Posterior cingulate gyrus (tissue), 11 donors: ENCODE measurements at regions of chr14 and their contacts with region 1.

Region 1: GRCh38 chr14:50954811-50955372 is 10.6 kb upstream of the PYGL start:
- DNase-seq: no peak

Region 2: GRCh38 chr14:50860478-50861086 is 94.3 kb before region 1 on chr14:
- intact Hi-C with region 1: loop called (anchors 5 kb)
- DNase-seq: peak; percentile 71 to 96 (median 85)

Region 3: GRCh38 chr14:51020024-51020710 is 65.3 kb after region 1 on chr14:
- intact Hi-C with region 1: loop called (anchors 10 kb)
- DNase-seq: peak in 7 of 10 donors; percentile 36 to 90 (median 54)

Region 4: DNA sequence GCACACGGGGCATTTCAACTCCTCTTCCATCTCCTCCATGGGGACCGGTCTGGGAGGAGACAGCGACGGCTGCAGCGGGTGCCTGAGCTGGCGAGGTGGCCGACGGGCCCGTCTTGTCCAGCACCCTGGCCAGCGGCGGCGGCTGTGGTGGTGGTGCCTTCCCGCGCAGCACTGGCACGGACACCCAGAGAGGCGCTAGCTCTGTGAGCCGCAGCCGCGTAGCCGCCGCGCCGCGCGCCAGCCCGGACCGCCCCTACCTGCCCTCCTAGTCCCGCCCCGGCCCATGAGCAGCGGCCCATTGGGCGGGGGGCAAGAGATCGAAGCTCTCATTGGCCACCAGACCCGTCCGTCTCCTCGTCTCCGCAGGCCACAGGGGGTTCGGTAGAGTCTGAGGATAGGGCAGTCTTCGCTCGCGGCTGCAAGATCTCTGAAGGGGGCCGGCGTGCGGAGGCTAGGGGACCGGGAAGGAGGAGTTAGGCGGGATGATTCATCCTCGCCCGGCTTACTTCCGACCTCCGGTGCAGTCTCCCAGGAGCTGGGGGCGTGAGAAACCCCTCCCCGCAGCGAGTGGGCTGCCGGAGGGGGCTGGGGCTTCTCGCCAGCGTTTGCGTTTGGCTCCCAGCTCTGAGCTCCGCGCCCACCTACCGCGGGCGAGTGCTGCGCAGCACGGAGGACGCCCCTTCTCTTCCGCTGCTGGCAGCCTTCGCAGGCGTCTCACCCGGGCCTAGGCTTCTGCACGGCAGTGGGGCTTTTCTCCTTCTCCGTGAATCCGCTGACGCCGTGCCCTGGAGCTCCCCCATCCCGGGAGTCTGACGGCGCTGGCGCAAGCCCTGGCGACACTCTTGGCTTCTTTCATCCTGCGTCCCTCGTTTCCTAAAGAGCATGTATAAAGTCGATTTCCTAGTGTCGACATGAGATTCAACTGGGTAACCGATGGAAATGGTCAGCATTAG is 140.3 kb after region 1 on chr14 and contains the start of gene TRIM9:
- intact Hi-C with region 1: loop called (anchors 5 kb)
- DNase-seq: peak; percentile 97 to 100 (median 99)

Region 5: GRCh38 chr14:51219473-51220448 is 264.9 kb after region 1 on chr14:
- intact Hi-C with region 1: loop called (anchors 2 kb)
- DNase-seq: no peak

Region 6: DNA sequence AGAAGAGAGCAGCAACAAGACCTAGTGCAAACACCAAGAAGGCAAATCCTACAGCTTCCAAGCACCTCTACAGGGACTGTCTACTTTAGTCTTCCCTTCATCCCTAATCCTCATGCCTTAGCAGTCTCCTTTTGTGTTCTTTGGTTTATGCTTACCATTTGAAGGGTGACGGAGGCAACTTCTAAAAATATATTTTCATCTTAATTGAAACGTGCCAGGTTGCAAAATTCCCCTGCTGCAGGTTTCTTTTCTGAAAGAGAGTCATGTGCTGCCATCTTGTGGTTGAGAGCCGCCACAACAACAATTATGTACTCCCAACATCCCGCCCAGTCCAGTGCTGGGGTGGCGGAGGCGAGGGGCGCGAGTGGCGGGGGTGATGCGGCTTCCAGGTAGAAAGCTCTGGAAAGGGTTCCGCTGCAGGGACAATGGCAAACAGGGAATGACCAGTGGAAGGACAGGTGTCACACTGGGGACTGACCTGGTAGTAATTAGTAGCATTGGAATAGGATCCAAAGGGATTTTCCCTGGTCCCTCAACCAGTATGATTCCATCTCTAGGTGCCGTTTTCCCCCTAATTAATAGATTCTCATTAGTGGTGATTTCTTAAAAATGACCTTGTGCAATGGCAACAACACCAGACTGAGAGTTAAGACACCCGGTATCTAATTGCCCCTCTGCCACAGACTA is 825.3 kb after region 1 on chr14:
- intact Hi-C with region 1: loop called (anchors 5 kb)
- DNase-seq: peak in 9 of 10 donors; percentile 31 to 91 (median 72)